ENCODE measurements at regions of chr20 and their contacts with region 1.

Region 1: DNA sequence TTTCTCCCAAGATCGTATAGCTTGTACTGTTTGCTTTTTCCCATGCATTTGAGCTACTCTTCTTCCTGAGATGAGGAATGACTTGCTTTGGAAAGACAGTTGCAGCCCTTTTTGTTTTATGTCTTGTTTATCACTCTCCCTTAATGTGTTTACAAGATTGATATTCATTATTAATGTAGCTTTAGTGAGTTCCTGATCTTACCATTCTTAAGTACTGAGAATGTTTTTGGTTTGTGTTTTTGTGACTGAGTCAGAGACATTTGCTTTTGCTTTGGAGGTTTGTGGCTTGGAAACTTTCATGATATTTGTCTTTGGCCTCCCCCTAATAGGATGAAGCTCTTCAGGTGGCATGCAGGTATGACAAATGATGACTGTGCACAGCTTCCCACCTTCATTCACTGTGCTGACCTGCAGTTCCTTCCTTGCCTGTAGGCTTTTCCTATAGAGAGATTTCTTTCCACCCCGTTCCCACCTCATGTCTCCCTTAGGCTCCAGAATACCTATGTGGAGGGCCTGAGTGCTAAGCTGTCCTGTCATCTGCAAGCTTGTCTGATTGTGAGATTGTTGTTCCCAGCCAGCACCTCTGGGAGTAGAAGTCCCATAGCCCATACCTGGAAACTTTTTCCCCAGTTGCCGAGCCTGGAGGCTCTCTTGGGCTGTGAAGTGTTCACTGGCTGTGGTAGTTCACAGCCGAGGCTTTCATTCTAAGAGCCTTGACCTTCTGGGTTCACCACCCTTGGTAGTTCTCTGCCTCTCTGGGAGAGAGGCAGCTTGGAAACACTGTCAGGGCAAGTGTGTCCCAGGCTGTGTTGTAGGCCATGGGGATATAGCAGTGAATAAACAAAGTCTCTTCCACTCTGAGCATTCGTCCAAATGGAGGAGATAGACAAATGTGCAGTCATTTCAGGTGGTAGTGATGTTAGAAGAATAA is 27.1 kb downstream of the CDS2 start:
- DNase-seq: peak; percentile 94
- H3K4me3 ChIP-seq: no peak overlapping the region
- H3K27ac ChIP-seq: peak overlapping the region; percentile 53
- H3K4me1 ChIP-seq: peaks cover 30% of the 10 kb centered on the region
- H3K27me3 ChIP-seq: no peaks in the 10 kb centered on the region
- CTCF ChIP-seq: peak; percentile 30 to 37

Region 2: DNA sequence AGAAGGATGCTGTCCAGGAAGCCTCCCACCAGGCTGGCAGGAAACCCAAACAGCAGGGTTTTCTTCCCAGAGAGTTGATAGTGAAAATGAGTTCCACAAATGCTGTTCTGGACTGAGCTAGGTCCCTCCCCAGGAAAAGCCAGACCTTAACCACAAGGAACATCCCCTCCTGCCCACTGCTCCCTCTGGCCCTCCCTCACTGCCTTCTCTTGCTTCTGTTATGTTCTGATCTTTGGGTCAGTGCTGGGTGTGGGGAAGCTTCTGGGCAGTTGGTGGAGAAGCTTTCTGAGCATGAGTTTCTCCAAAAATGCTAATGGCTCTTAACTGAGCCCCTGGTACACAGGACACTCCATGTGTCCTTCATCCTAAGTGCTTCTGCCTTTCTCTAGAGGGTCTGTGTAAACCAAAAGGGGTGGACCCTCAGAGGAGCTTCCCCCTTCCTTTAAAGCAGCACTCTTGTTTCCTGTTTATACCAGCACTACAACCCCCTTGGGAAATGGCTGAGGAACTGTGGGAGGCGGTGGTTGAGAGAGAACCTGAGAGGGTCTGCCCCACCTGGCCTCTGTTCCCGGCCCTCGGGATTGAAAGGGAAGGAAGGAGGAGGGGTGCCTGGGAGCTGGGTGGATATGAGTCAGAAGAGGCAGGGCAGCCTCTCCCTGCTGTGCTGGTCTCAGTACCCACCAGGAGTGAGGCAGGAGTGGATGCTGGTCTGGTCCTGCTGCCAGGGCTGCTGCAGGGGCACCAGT is 14.9 kb after region 1 on chr20:
- CTCF ChIA-PET with region 1: interaction called, 12 read pairs
- dilution Hi-C with region 1: no loop called
- in situ Hi-C with region 1: no loop called
- intact Hi-C with region 1: no loop called
- DNase-seq: peak; percentile 45
- H3K4me3 ChIP-seq: no peak overlapping the region
- H3K27ac ChIP-seq: peak overlapping the region; percentile 9
- H3K4me1 ChIP-seq: peaks cover 14% of the 10 kb centered on the region
- H3K27me3 ChIP-seq: no peaks in the 10 kb centered on the region
- CTCF ChIP-seq: no peak